ENCODE measurements at regions of chr5 and their contacts with region 1.

Region 1: GRCh38 chr5:1641560-1642166 is 117.9 kb upstream of the LPCAT1 start:
- DNase-seq: peak; percentile 82
- ATAC-seq: peak; percentile 74
- H3K4me3 ChIP-seq: peak overlapping the region in 1 of 3 experiments; percentile 43; a peak in 1 of 6 replicates
- H3K27ac ChIP-seq: no peak overlapping the region
- H3K4me1 ChIP-seq: peaks cover 21% of the 10 kb centered on the region; the same call in 1 of the 2 replicates
- H3K27me3 ChIP-seq: peaks cover 15 to 56% of the 10 kb centered on the region in 2 experiments
- CTCF ChIP-seq: peak; percentile 94
- EP300 ChIP-seq: no peak
- POLR2A ChIP-seq: no peak
- RAD21 ChIP-seq: peak; percentile 67

Region 2: DNA sequence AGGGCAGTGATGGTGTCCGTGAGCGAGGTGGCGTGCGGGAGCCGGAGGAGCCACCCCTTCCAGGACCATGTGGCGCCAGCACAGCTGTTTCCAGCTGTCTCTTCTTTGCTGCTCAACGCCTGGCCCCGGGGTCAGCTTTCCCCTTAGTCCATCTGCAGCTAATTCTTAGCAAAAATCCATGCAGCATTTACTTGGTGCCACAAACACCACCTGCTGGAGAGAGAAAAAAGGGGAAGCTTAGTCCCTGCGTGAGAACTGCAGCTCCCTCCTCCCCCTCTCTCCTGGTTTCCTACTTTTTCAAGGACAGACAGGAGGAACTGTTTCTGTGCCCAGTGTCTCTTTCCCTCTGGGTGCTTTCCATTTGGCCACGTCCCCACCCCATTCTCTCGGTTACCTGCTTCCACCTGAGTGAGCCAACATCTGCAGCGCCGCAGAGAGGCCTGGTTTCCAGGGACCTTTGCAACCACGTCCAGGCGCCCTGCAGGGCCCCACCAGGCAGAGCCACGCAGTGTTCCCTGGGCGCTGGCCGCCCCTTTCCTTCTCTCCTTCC is 436.9 kb before region 1 on chr5:
- CTCF ChIA-PET with region 1: interaction called, 6 read pairs
- POLR2A ChIA-PET with region 1: no interaction called
- in situ Hi-C with region 1: no loop called
- intact Hi-C with region 1: loop called (anchors 10 kb)
- DNase-seq: peak; percentile 71
- ATAC-seq: peak; percentile 74
- H3K4me3 ChIP-seq: peak overlapping the region in 2 of 3 experiments; percentile 24 to 58; a peak in 3 of 6 replicates
- H3K27ac ChIP-seq: no peak overlapping the region
- H3K4me1 ChIP-seq: peaks cover 31% of the 10 kb centered on the region
- H3K27me3 ChIP-seq: peaks cover 17 to 82% of the 10 kb centered on the region in 2 experiments
- CTCF ChIP-seq: peak; percentile 80
- EP300 ChIP-seq: no peak
- POLR2A ChIP-seq: no peak
- RAD21 ChIP-seq: peak; percentile 73; the same call in 1 of the 2 replicates

Region 3: GRCh38 chr5:1385395-1386273 is 256.0 kb before region 1 on chr5:
- CTCF ChIA-PET with region 1: interaction called, 13 read pairs
- POLR2A ChIA-PET with region 1: no interaction called
- in situ Hi-C with region 1: loop called (anchors 10 kb)
- intact Hi-C with region 1: loop called (anchors 1 kb)
- DNase-seq: peak; percentile 20
- ATAC-seq: peak; percentile 93
- H3K4me3 ChIP-seq: peak overlapping the region; percentile 50 to 71 (median 58)
- H3K27ac ChIP-seq: no peak overlapping the region
- H3K4me1 ChIP-seq: peaks cover 14% of the 10 kb centered on the region
- H3K27me3 ChIP-seq: peaks cover 24 to 85% of the 10 kb centered on the region in 2 experiments
- CTCF ChIP-seq: 0 out of 2 replicates have a peak, but pooled peaks have one; percentile 8
- EP300 ChIP-seq: no peak
- POLR2A ChIP-seq: no peak
- RAD21 ChIP-seq: no peak

Region 4: GRCh38 chr5:1523771-1524480 is 117.7 kb before region 1 on chr5 and contains the start of gene LPCAT1:
- CTCF ChIA-PET with region 1: no interaction called
- POLR2A ChIA-PET with region 1: no interaction called
- in situ Hi-C with region 1: loop called (anchors 25 kb)
- intact Hi-C with region 1: no loop called
- DNase-seq: peak; percentile 30
- ATAC-seq: peak; percentile 76
- H3K4me3 ChIP-seq: peak within 1 kb of the TSS; percentile 81 to 94 (median 90)
- H3K27ac ChIP-seq: peak within 1 kb of the TSS; percentile 66
- H3K4me1 ChIP-seq: peaks cover 54% of the 10 kb centered on the region
- H3K27me3 ChIP-seq: no peaks in the 10 kb centered on the region
- CTCF ChIP-seq: no peak; the same call in 1 of the 2 replicates
- EP300 ChIP-seq: no peak
- POLR2A ChIP-seq: no peak; a peak in 1 of 4 replicates
- RAD21 ChIP-seq: no peak
- total RNA-seq, gene LPCAT1: 16.0 and 29.8 TPM in 2 replicates

Measured in HepG2 (cell line).